ENCODE measurements at regions of chr7 and their contacts with region 1.

Region 1: GRCh38 chr7:25851332-25852210 is 300.4 kb upstream of the NFE2L3 start:
- DNase-seq: peak; percentile 76
- ATAC-seq: peak; percentile 46
- H3K4me3 ChIP-seq: no peak overlapping the region
- H3K27ac ChIP-seq: peak overlapping the region; percentile 14; the same call in 1 of the 2 replicates
- H3K4me1 ChIP-seq: peaks cover 20% of the 10 kb centered on the region; the same call in 1 of the 2 replicates
- H3K27me3 ChIP-seq: peaks cover 3% of the 10 kb centered on the region; the same call in 1 of the 2 replicates
- CTCF ChIP-seq: peak; percentile 83
- POLR2A ChIP-seq: no peak
- RAD21 ChIP-seq: peak; percentile 88

Region 2: GRCh38 chr7:25179771-25180591 is 671.6 kb before region 1 on chr7:
- CTCF ChIA-PET with region 1: no interaction called
- POLR2A ChIA-PET with region 1: no interaction called
- dilution Hi-C with region 1: no loop called
- in situ Hi-C with region 1: no loop called
- intact Hi-C with region 1: loop called (anchors 5 kb)
- DNase-seq: peak; percentile 66
- ATAC-seq: peak; percentile 98
- H3K4me3 ChIP-seq: peak overlapping the region; percentile 71
- H3K27ac ChIP-seq: peak overlapping the region; percentile 68
- H3K4me1 ChIP-seq: peaks cover 2% of the 10 kb centered on the region; the same call in 1 of the 2 replicates
- H3K27me3 ChIP-seq: peaks cover 4% of the 10 kb centered on the region; the same call in 1 of the 2 replicates
- CTCF ChIP-seq: peak; percentile 70
- POLR2A ChIP-seq: no peak
- RAD21 ChIP-seq: no peak

Region 3: DNA sequence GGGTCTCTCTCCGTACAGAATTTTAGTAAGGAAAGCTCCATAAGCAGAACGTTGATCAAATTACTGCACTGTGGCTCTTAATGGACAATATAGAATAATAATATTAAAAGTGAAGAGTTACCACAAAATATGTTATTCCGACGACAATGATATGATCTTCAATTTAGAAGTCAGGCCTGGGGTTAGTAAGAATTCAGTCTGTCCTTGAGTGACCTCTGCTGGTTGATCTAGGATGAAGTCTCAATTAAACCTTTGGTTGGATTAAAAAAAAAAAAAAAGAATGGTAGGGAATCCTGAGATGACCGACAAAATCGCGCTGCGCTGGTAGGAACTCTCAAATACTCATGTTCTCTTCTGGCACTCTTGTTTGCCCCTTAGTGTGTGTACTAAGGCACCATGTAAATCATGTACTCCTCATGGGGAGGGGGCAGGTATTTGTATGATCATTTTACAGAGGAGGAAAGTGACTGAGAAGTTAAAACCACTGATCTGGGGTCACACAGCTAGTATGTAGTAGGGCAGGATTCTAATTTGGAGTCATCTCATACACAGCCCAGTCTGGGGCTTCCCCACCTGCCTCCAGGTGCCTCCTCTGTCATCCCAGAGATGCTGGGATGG is 462.0 kb before region 1 on chr7:
- CTCF ChIA-PET with region 1: interaction called, 5 read pairs
- POLR2A ChIA-PET with region 1: no interaction called
- dilution Hi-C with region 1: no loop called
- in situ Hi-C with region 1: loop called (anchors 5 kb)
- intact Hi-C with region 1: loop called (anchors 1 kb)
- DNase-seq: peak; percentile 42
- ATAC-seq: peak; percentile 73
- H3K4me3 ChIP-seq: no peak overlapping the region
- H3K27ac ChIP-seq: no peak overlapping the region
- H3K4me1 ChIP-seq: no peaks in the 10 kb centered on the region
- H3K27me3 ChIP-seq: peaks cover 6% of the 10 kb centered on the region
- CTCF ChIP-seq: peak; percentile 57
- POLR2A ChIP-seq: no peak
- RAD21 ChIP-seq: peak; percentile 52

Region 4: DNA sequence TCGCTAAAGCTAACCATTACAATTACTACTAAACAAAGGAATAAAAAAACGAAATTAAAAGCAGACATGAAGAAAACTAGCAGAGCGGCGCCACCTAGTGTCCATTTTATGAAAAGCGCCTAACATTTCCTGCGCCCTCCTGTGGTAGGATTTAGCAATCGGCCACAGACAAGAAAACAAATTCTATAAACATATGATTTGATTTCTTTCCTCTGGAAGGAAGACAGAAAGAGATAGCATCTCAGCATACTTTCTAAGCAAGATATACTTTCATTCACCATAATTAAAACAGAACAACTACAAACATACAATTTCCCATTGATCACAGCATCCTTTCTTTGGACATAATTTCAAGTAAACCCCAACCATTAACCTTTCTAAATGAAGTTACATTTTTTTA is 285.6 kb before region 1 on chr7:
- CTCF ChIA-PET with region 1: no interaction called
- POLR2A ChIA-PET with region 1: no interaction called
- dilution Hi-C with region 1: no loop called
- in situ Hi-C with region 1: loop called (anchors 5 kb)
- intact Hi-C with region 1: loop called (anchors 1 kb)
- DNase-seq: peak; percentile 69
- ATAC-seq: peak; percentile 65
- H3K4me3 ChIP-seq: no peak overlapping the region
- H3K27ac ChIP-seq: no peak overlapping the region
- H3K4me1 ChIP-seq: no peaks in the 10 kb centered on the region
- H3K27me3 ChIP-seq: no peaks in the 10 kb centered on the region; the same call in 1 of the 2 replicates
- CTCF ChIP-seq: peak; percentile 100; the same call in 1 of the 2 replicates
- POLR2A ChIP-seq: no peak
- RAD21 ChIP-seq: peak; percentile 71

Region 5: DNA sequence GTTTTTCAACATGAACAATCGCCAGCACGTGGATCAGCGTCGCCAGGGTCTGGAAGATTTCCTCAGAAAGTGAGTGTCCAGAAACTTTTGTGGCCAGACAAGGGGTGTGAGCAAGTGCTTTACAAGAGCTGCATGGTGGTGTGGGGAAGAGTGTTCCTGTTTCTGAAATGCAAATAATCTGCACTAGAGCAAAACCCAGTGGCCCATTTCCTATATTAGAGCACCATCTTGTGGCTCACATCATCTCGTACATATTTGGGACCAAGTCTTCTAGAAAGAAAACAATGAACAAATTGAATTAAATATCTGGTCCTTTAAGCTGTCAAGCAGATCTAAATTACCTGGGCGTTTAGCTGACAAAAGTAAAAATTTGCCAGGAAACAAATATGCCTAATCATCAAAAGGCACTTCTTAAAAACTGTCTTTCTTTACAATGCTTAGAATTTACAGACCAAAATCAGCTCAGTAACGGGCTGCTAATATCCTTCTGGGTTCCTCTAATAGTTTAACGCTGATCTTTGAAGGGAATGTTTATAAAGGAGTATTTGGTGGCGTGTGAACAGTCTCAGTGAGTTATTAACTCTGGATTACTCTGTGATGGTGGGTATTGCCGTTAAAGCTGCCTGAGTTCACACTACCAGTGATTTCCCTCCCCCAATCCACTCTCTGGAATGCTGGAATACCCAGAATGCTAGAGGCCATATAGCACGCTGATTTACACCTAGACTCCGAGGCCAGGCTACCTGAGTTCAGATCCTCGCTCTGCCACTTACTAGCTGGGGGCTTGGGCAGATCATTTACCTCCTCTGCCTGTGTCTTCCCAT is 513.7 kb after region 1 on chr7:
- CTCF ChIA-PET with region 1: interaction called, 3 read pairs
- POLR2A ChIA-PET with region 1: no interaction called
- dilution Hi-C with region 1: no loop called
- in situ Hi-C with region 1: no loop called
- intact Hi-C with region 1: loop called (anchors 1 kb)
- DNase-seq: peak; percentile 77
- ATAC-seq: peak; percentile 92
- H3K4me3 ChIP-seq: no peak overlapping the region
- H3K27ac ChIP-seq: no peak overlapping the region
- H3K4me1 ChIP-seq: no peaks in the 10 kb centered on the region
- H3K27me3 ChIP-seq: peaks cover 16% of the 10 kb centered on the region
- CTCF ChIP-seq: peak; percentile 93
- POLR2A ChIP-seq: no peak
- RAD21 ChIP-seq: peak; percentile 98

Region 6: DNA sequence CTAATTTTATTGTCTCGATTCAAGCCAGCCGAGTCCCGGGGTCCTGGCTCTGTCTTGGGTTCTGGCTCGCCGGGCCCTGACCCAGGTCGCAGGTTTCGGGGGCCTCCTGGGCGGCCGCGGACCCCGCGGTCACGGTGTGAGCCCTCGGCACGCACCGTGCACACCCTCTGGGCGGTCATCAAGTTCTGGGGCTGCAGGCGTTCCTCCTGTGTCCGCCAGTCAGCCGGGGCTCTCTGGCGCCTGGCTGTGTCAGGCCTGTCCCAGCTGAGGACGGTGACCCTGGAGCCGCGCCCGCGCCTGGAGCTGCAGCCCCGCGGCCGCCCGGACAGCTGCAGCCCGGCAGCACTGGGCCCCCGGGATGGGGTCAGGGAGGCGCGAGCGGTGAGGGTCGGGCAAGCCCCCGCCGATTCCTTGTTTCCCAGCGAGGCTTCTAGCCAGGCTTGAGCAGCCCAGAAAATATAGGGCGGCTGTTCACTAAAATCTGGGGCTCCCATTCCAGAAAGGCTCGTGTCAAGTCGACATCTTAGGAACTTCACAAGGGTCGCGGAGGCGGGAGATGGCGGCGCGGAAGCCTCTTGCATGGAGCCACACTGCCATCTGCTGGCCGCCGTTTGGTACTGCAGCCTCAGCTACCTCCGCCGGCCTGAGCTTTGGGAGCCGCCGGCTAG is 1309.1 kb after region 1 on chr7:
- CTCF ChIA-PET with region 1: no interaction called
- POLR2A ChIA-PET with region 1: no interaction called
- dilution Hi-C with region 1: no loop called
- in situ Hi-C with region 1: loop called (anchors 5 kb)
- intact Hi-C with region 1: no loop called
- DNase-seq: peak; percentile 77
- ATAC-seq: peak; percentile 89
- H3K4me3 ChIP-seq: peak overlapping the region; percentile 55
- H3K27ac ChIP-seq: no peak overlapping the region
- H3K4me1 ChIP-seq: peaks cover 1% of the 10 kb centered on the region; the same call in 1 of the 2 replicates
- H3K27me3 ChIP-seq: peaks cover 28% of the 10 kb centered on the region
- CTCF ChIP-seq: peak; percentile 95
- POLR2A ChIP-seq: no peak
- RAD21 ChIP-seq: peak; percentile 96